Heart right ventricle (tissue), 16 donors: ENCODE measurements at regions of chr22 and their contacts with region 1.

Region 1: DNA sequence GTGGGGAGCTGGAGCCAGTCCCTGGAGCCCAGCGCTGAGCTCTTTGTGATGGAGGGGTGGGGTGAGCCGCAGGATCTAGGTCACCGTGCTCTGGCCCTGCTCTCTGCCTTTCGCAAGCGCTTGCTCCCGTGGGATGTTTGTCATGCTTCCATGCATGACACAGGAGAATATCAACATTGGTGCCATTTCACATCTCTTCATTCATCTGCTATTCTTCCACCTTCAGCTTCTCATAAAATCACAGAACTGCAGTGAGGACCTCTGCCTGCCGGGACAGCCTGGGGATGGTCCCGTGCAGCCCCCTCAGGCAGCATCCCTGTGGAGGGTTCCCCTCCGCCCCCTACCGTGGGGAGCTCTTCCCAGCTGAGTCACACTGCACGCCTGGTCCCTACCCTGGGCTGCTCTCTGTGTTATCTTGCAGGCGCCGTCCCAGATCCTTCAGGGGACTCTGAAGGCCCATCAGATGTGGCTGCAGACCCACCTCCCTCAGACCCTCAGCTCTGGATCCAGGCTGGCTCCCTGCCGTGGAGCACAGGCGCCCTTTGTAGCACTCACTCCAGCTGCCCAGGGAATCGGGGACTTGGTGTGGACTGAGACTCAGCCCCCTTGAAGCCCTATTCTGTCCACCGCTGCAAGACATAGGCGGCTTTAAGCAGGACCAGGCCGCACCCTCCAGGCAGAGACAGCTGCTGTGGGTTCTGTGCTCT is 5.1 kb upstream of the SEPTIN5 start:
- DNase-seq: peak in 1 of 2 donors; percentile 73
- ATAC-seq: peak in 6 of 8 donors; percentile 41 to 72 (median 47)
- H3K4me3 ChIP-seq: no peak overlapping the region
- H3K27ac ChIP-seq: no peak overlapping the region
- H3K4me1 ChIP-seq: peaks cover 4 to 16% (median 6%) of the 10 kb centered on the region in 9 donors
- H3K27me3 ChIP-seq: peaks cover 5 to 30% (median 11%) of the 10 kb centered on the region in 7 donors
- CTCF ChIP-seq: no peak

Region 2: GRCh38 chr22:19691721-19692341 is 17.4 kb before region 1 on chr22:
- intact Hi-C with region 1: loop called in 1 of 10 experiments (anchors 2 kb)
- DNase-seq: no peak
- ATAC-seq: peak in 4 of 8 donors; percentile 42 to 84 (median 53)
- H3K4me3 ChIP-seq: peak overlapping the region in 4 of 10 donors; percentile 1 to 25 (median 13)
- H3K27ac ChIP-seq: no peak overlapping the region
- H3K4me1 ChIP-seq: peaks cover 0 to 24% (median 6%) of the 10 kb centered on the region in 9 donors
- H3K27me3 ChIP-seq: peaks cover 0 to 8% (median 0%) of the 10 kb centered on the region in 7 donors
- CTCF ChIP-seq: no peak